ENCODE measurements at regions of chr10 and their contacts with region 1.

Region 1: DNA sequence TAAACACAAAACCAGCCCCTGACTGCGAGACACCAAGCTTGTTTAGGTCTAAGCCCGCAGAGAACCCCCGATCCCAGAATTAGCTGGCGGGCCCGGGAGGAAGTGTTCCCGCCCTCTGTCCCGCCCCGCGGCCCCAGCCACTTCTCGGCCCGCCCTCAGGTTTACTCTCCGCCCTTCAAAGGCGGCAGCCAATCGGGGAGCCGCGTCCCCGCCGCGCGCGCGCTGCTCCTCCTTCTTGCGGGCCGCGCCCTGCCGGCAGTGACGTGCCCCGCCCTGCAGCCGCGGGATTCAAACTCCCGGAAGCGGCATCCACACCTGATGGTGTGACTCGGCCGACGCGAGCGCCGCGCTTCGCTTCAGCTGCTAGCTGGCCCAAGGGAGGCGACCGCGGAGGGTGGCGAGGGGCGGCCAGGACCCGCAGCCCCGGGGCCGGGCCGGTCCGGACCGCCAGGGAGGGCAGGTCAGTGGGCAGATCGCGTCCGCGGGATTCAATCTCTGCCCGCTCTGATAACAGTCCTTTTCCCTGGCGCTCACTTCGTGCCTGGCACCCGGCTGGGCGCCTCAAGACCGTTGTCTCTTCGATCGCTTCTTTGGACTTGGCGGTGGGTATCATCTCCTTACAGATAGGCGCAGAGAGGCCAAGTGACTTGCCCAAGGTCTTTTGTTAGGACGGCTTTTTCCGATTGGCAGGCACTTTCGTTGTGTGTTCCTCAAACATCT is at the start of gene CEP55:
- DNase-seq: peak; percentile 96
- H3K4me3 Mint-ChIP-seq: peak within 1 kb of the TSS; percentile 90
- H3K27ac Mint-ChIP-seq: peak within 1 kb of the TSS; percentile 63
- H3K4me1 Mint-ChIP-seq: peaks cover 18% of the 10 kb centered on the region
- H3K27me3 Mint-ChIP-seq: peaks cover 7% of the 10 kb centered on the region
- total RNA-seq, gene CEP55: 64.4 to 68.2 TPM

Region 2: DNA sequence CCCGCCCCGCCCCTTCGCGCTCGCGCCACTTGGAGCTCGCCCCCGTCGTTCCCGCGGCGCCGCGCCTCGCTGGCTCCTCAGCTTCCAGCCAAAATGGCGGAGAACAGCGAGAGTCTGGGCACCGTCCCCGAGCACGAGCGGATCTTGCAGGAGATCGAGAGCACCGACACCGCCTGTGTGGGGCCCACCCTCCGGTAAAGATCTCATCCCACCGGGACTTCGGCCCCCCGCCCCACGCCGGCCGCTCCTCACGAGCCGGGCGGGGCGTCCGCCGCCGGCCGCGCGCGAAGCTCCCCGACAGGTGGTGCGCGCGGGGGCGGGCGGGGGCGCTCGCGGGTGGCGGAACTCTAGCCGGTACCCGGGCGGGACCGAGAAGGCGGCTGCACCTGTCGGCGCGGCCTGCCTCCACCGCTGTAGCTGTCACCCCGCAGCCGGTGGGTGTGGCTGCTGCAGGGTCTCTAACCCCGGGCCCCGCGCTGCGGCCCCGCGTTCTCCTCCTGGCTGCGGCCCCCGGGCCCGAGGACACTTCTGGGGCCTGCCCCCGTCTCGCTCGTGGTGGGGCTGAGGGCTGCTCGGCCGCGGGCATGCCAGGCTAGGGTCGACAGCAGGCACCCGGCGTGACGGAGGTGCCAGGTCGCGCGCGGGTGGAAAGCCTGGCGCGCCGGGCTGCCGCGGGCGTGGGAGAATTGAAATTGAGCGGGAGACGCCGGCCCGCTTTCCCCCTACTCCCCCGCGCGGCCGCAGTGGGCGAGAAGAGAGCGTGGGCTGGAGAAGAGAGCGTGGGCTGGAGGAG is 647.8 kb before region 1 on chr10 and contains the start of gene EXOC6:
- CTCF ChIA-PET with region 1: no interaction called
- intact Hi-C with region 1: loop called (anchors 1 kb)
- DNase-seq: peak; percentile 86
- H3K4me3 Mint-ChIP-seq: peak within 1 kb of the TSS; percentile 88
- H3K27ac Mint-ChIP-seq: peak within 1 kb of the TSS; percentile 61
- H3K4me1 Mint-ChIP-seq: peaks cover 24% of the 10 kb centered on the region
- H3K27me3 Mint-ChIP-seq: no peaks in the 10 kb centered on the region
- total RNA-seq, gene EXOC6: 7.6 to 9.3 TPM

Region 3: DNA sequence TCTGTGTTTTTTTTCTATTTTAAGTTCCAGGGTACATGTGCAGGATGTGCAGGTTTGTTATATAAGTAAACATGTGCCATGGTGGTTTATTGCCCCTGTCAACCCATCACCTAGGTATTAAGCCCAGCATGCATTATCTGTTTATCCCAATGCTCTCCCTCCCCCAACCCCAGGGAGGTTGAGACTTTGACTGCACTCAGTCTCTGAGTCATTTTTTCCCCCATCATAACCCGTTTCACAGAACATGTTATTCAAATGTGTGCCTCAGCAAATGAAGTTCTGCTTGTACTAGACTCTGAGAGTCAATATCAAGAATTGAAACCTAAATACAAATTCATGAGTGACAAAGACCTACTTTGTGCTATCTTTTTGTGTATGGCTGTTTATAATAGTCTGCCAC is 505.9 kb before region 1 on chr10:
- CTCF ChIA-PET with region 1: no interaction called
- intact Hi-C with region 1: loop called (anchors 10 kb)
- DNase-seq: peak; percentile 62
- H3K4me3 Mint-ChIP-seq: no peak overlapping the region
- H3K27ac Mint-ChIP-seq: peak overlapping the region; percentile 70
- H3K4me1 Mint-ChIP-seq: peaks cover 37% of the 10 kb centered on the region
- H3K27me3 Mint-ChIP-seq: no peaks in the 10 kb centered on the region

Region 4: DNA sequence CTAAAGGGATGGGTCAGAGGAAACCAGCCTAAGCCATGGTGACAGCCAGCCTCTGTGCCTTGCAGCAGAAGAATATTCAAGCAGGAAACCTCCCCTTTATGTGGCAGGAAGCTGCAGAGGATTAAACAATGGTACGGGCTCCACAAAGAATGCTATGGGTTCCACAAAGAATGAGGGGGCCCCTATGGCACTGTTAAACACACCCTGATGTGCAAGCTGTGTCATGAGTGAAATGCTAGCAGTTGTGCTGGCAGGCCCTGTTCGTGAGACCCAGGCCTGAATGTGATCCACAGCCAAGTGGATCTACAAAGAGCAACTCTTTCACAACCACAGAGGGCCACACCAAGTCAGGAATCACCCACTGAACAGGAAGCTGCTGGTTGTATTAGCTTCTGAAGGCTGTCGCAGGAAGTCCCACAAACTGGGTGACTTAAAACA is 83.2 kb before region 1 on chr10:
- CTCF ChIA-PET with region 1: no interaction called
- intact Hi-C with region 1: loop called (anchors 1 kb)
- DNase-seq: peak; percentile 64
- H3K4me3 Mint-ChIP-seq: no peak overlapping the region
- H3K27ac Mint-ChIP-seq: peak overlapping the region; percentile 59
- H3K4me1 Mint-ChIP-seq: peaks cover 59% of the 10 kb centered on the region
- H3K27me3 Mint-ChIP-seq: no peaks in the 10 kb centered on the region

Region 5: GRCh38 chr10:93445097-93445960 is 51.2 kb before region 1 on chr10:
- CTCF ChIA-PET with region 1: no interaction called
- intact Hi-C with region 1: no loop called
- DNase-seq: no peak
- H3K4me3 Mint-ChIP-seq: no peak overlapping the region
- H3K27ac Mint-ChIP-seq: no peak overlapping the region
- H3K4me1 Mint-ChIP-seq: no peaks in the 10 kb centered on the region
- H3K27me3 Mint-ChIP-seq: no peaks in the 10 kb centered on the region

Region 6: DNA sequence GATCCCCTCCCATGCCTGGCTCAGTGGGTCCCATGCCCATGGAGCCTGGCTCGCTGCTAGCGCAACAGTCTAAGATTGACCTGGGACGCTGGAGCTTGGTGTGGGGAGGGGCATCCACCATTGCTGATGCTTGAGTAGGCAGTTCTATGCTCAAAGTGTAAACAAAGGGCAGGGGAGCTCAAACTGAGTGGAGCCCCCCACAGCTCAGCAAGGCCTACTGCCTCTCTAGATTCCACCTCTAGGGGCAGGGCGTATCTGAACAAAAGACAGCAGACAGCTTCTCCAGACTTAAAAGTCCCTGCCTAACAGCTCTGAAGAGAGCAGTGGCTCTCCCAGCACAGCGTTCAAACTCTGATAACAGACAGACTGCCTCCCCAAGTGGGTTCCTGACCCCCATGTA is 38.8 kb after region 1 on chr10:
- CTCF ChIA-PET with region 1: no interaction called
- intact Hi-C with region 1: no loop called
- DNase-seq: no peak
- H3K4me3 Mint-ChIP-seq: no peak overlapping the region
- H3K27ac Mint-ChIP-seq: no peak overlapping the region
- H3K4me1 Mint-ChIP-seq: no peaks in the 10 kb centered on the region
- H3K27me3 Mint-ChIP-seq: peaks cover 6% of the 10 kb centered on the region

Region 7: DNA sequence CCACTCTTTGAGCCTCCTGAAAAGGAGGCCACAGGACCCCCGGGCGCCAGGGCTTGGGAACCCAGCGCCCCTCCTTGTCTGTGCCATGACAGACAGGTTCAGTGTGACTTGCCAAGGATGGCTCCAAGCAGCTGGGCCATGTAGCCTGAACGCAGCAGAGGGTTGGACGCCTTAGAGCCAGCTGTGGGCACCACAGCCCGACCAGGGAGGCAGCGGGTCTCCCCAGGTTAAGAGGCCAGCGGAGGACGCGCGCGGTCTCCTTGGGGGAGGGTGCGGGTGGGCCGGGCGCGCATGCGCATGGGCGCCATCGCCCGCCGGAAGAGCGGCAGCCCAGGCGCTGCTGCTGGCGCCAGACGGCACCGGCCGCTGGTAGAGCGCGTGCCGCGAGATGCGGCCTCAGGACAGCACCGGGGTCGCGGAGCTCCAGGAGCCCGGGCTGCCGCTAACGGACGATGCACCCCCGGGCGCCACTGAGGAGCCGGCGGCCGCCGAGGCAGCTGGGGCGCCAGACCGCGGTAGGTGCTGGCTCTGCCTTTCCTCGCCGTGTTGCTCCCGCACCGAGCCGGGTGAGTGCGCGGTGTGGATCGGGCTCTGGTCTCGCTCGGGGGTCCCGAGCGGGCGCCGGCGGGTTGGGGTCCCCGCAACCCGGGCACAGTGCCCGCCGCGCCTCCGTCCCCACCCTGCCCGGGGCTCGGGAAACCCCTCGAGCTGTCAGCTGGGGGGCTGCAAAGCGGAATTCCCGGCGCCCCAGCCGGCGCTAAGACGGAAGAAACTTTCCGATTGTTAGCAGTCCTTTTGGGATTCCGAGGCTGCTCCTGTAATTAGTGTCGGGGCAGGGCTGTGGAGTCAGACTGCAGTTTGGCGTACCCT is 397.4 kb after region 1 on chr10 and contains the start of gene SLC35G1:
- CTCF ChIA-PET with region 1: no interaction called
- intact Hi-C with region 1: loop called (anchors 5 kb)
- DNase-seq: peak; percentile 71
- H3K4me3 Mint-ChIP-seq: peak within 1 kb of the TSS; percentile 82
- H3K27ac Mint-ChIP-seq: peak within 1 kb of the TSS; percentile 37
- H3K4me1 Mint-ChIP-seq: peaks cover 37% of the 10 kb centered on the region
- H3K27me3 Mint-ChIP-seq: no peaks in the 10 kb centered on the region
- total RNA-seq, gene SLC35G1: 3.8 to 4.1 TPM

Region 8: DNA sequence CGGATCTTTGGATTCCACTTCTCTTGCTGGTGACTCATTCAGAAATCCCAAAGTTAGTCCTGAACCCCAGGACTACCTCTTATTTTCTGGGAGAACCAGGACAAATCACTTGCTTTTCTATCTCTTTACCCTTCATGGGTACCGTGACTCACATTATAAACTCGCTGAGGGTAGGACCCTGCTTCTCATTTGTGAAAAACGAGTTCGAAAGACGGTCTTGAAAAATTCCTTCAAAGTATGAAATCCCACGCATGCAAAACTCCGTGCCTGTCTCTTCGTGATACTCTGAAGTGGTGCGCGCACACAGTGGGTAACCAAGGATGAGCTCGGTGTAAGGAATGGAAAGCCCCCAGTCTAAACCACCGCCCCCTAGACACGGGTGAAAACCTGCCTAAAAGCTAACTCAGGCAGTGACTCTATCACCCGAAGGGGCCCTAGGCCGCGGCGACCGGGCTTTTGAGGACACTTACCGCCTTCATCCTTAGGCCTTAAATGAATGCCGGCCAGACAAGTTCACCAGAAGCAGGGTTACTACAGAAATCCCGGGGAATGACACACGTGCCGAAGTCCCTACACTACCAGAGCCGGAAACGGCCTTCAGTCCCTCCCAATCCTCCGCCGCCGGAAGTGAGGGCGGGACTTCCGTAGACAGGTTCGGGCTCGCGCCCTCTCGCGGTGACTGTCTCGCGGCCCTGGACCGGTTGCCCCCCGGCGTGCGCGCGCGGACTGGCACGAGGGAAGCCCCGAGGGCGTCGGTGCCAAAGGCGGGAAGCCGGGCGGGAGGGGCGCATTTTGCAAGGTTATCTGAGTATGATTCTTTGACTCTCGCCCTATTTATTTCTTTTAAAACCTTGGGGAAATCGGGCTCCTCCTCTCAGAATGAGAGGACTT is 866.1 kb after region 1 on chr10 and contains the start of gene NOC3L:
- CTCF ChIA-PET with region 1: no interaction called
- intact Hi-C with region 1: loop called (anchors 5 kb)
- DNase-seq: peak; percentile 96
- H3K4me3 Mint-ChIP-seq: peak within 1 kb of the TSS; percentile 83
- H3K27ac Mint-ChIP-seq: peak within 1 kb of the TSS; percentile 91
- H3K4me1 Mint-ChIP-seq: peaks cover 30% of the 10 kb centered on the region
- H3K27me3 Mint-ChIP-seq: no peaks in the 10 kb centered on the region
- total RNA-seq, gene NOC3L: 39.3 to 40.1 TPM

Region 9: DNA sequence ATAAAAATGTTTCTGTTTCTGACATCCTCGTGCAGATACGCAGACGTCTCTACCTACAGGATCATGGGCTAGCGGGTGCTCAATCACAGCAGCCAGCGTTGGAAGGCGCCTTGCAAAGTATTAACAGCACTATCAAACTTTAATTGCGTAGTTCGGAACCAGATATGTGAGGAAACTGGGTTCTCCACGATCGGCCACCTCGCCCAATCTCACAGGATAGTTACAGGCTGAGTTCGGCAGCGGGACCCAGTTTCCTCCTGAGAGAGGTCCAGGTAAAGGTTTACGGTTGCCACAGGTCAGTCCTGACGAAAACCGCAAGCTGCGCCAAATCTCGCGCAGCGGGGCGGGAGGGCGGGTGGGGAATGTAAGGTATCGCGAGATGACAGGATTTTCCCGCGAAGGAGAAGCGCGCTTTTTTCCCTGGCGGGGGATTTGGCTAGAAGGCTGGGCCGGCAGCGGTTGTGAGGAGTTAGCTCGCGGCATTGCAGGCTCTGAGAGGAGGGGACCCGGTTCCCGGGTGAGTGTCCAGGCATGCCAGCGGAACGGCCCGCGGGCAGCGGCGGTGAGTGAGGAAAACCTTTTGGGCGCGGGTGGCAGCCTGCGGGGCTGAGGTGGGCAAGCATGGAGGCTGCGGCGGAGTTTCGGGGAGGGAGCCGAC is 1049.0 kb after region 1 on chr10 and contains the start of gene HELLS:
- CTCF ChIA-PET with region 1: no interaction called
- intact Hi-C with region 1: loop called (anchors 10 kb)
- DNase-seq: peak; percentile 85
- H3K4me3 Mint-ChIP-seq: peak within 1 kb of the TSS; percentile 98
- H3K27ac Mint-ChIP-seq: peak within 1 kb of the TSS; percentile 89
- H3K4me1 Mint-ChIP-seq: peaks cover 13% of the 10 kb centered on the region
- H3K27me3 Mint-ChIP-seq: peaks cover 2% of the 10 kb centered on the region
- total RNA-seq, gene HELLS: 109 TPM